GM12878 (cell line): ENCODE measurements at regions of chr17 and their contacts with region 1.

Region 1: DNA sequence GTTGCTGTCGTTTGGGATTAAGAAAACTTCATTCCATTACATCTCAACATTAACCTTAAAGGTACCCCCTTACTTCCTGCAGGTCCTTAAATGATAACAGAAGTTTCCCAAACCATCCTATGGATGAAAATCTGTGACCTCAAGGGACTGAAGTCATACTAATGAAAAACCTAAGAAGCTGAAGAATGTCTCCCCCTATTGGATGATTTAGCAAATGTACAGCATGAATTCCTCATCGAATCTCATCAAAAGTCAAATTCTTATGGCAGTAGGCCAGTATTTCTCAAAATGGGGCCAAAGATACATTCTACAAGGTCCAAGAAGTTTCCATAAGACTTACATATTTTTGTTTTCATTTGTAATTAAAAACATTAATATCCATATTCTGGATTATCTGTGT is 13.5 kb downstream of the SCO1 start:
- DNase-seq: no peak
- ATAC-seq: no peak
- H3K4me3 ChIP-seq: no peak overlapping the region
- H3K27ac ChIP-seq: no peak overlapping the region
- H3K4me1 ChIP-seq: no peaks in the 10 kb centered on the region
- H3K27me3 ChIP-seq: no peaks in the 10 kb centered on the region
- CTCF ChIP-seq: peak; percentile 30 to 61 (median 32); a peak in 5 of 6 replicates
- EP300 ChIP-seq: no peak
- POLR2A ChIP-seq: no peak
- RAD21 ChIP-seq: peak; percentile 34; the same call in 1 of the 2 replicates

Region 2: GRCh38 chr17:10664571-10664970 is 19.3 kb before region 1 on chr17:
- CTCF ChIA-PET with region 1: interaction called, 10 read pairs
- POLR2A ChIA-PET with region 1: no interaction called
- RAD21 ChIA-PET with region 1: no interaction called
- SMC1A ChIA-PET with region 1: no interaction called
- in situ Hi-C with region 1: no loop called
- intact Hi-C with region 1: no loop called
- DNase-seq: no peak
- ATAC-seq: no peak
- H3K4me3 ChIP-seq: no peak overlapping the region
- H3K27ac ChIP-seq: no peak overlapping the region
- H3K4me1 ChIP-seq: no peaks in the 10 kb centered on the region
- H3K27me3 ChIP-seq: no peaks in the 10 kb centered on the region
- CTCF ChIP-seq: no peak
- EP300 ChIP-seq: no peak
- POLR2A ChIP-seq: no peak
- RAD21 ChIP-seq: no peak

Region 3: DNA sequence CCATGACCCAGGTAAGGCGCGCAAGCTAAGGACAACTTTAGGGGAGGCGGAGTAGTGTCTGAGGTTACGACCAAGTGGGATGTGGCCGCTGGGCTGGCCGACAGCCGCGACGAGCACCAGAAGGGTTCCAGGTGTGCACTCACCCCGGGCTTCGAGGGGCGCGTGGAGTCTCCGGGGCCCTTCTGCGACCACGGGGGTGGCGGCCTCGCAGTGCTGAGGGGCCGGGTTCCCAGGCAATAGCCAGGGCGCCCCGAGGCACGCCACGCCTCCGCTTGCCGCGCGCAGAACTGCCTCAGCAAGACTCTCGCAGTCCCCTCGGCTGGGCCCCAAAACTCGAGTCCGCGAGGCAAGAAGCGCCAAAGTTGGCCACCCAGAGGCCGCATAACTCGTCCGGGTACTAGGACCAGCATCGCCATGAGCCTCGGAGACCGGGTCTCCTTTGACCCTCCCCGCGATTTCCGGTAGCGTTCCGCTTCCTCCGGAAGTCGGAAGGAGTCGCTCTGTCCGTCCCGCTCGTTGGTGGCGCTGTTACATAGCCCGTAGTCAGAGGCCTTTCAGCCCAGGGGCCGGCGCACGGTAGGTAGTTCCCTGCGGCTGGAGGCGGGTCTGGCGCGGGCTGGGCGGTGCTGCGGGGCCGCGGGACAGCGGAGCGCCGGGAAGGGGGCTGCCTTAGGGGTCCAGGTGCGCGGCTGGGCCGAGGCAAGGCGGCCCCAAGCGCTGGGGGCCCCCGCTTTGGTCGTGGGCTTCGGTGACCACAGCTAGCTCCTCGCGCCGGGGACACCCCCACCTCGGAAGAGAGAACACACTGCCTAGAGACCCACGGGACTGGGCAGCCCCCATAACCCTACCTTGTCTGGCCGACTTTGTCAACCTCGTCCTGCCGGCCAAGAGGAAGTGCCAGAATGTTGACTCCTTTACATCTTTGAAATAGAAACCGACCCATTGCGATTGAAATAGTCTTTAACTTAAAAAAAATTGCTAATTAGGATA is 13.5 kb after region 1 on chr17 and contains the starts of genes ADPRM and SCO1:
- CTCF ChIA-PET with region 1: interaction called, 40 read pairs
- POLR2A ChIA-PET with region 1: no interaction called
- RAD21 ChIA-PET with region 1: no interaction called
- SMC1A ChIA-PET with region 1: interaction called, 4 read pairs
- in situ Hi-C with region 1: no loop called
- intact Hi-C with region 1: no loop called
- DNase-seq: peak; percentile 73
- ATAC-seq: peak; percentile 98
- H3K4me3 ChIP-seq: peak within 1 kb of the TSS; percentile 93
- H3K27ac ChIP-seq: peak within 1 kb of the TSS; percentile 91
- H3K4me1 ChIP-seq: peaks cover 10% of the 10 kb centered on the region
- H3K27me3 ChIP-seq: no peaks in the 10 kb centered on the region
- CTCF ChIP-seq: peak; percentile 31 to 47 (median 34); a peak in 5 of 6 replicates
- EP300 ChIP-seq: peak; percentile 8 to 30; a peak in 1 of 4 replicates
- POLR2A ChIP-seq: peak; percentile 97
- RAD21 ChIP-seq: no peak
- polyA plus RNA-seq, gene ADPRM: 14.2 to 18.4 TPM
- polyA plus RNA-seq, gene SCO1: 8.2 to 24.8 TPM

Region 4: DNA sequence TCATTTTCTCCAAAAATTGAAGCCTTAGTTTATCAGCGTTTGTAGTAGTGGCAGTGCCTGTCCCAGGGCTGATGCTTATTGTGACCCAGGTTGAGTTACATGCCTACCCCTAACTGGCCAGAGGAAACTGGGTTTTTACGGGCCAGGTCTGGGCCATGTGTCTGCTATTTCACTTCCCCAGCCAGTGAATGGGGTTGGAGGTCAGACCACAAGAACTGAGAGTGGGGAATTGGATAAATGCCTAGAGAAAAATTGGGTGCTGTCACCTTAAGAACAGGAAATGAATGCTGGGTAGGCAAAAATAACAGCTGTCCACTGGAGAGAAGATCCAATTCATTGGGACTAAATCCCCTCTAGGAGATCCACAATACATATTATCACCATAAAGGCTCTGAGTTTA is 18.7 kb after region 1 on chr17:
- CTCF ChIA-PET with region 1: interaction called, 18 read pairs
- POLR2A ChIA-PET with region 1: interaction called, 3 read pairs
- RAD21 ChIA-PET with region 1: no interaction called
- SMC1A ChIA-PET with region 1: interaction called, 3 read pairs
- in situ Hi-C with region 1: no loop called
- intact Hi-C with region 1: no loop called
- DNase-seq: no peak
- ATAC-seq: peak; percentile 24
- H3K4me3 ChIP-seq: no peak overlapping the region
- H3K27ac ChIP-seq: no peak overlapping the region
- H3K4me1 ChIP-seq: peaks cover 10% of the 10 kb centered on the region
- H3K27me3 ChIP-seq: no peaks in the 10 kb centered on the region
- CTCF ChIP-seq: no peak
- EP300 ChIP-seq: no peak
- POLR2A ChIP-seq: no peak
- RAD21 ChIP-seq: no peak